CD4-positive, alpha-beta T cell (primary cell): ENCODE measurements at regions of chr2 and their contacts with region 1.

Region 1: GRCh38 chr2:216404010-216404618 is 8.2 kb upstream of the SMARCAL1 start:
- DNase-seq: peak in 13 of 14 experiments; percentile 15 to 72 (median 41)
- ATAC-seq: peak; percentile 72
- H3K4me3 ChIP-seq: no peak overlapping the region
- H3K4me3 Mint-ChIP-seq: no peak overlapping the region
- H3K27ac ChIP-seq: no peak overlapping the region
- H3K27ac Mint-ChIP-seq: no peak overlapping the region
- H3K4me1 ChIP-seq: peaks cover 2% of the 10 kb centered on the region
- H3K4me1 Mint-ChIP-seq: peaks cover 4% of the 10 kb centered on the region
- H3K27me3 ChIP-seq: no peaks in the 10 kb centered on the region
- H3K27me3 Mint-ChIP-seq: no peaks in the 10 kb centered on the region
- CTCF ChIP-seq: peak; percentile 79

Region 2: DNA sequence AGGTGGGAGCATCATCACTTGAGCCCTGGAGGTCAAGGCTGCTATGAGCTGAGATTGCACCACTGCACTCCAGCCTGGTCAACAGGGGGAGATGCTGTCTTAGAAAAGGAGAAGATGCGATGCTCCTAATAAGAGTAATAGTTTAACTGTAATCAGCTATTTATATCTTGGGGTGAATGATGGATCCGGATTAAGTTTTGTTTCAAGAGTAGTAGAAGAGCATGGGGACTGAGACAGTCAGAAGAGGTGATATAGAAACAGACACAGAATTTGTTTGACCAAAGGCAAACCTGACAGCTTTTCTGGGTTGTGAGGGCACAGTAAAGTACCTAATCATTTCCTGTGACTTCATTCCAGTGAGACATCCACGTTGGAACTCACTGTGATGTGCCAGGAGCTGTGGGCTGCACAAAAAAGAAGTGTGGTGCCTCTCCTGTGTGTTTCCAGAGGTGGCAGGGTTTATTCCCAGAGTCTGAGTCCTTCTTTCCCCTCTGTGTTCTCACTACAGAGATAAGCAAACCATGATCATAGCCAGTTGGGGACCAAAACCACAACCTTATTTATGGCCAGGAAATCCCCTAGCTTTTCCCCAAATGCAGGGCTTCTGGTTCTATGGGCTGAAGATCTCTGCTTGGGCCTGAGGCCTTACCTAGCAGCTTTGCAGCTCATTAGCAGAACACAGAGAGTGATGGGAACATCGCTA is 181.3 kb before region 1 on chr2:
- CTCF ChIA-PET with region 1: interaction called, 4 read pairs
- POLR2A ChIA-PET with region 1: no interaction called
- intact Hi-C with region 1: loop called (anchors 2 kb)
- DNase-seq: peak in 4 of 14 experiments; percentile 9 to 30 (median 25)
- ATAC-seq: no peak
- H3K4me3 ChIP-seq: no peak overlapping the region
- H3K4me3 Mint-ChIP-seq: no peak overlapping the region
- H3K27ac ChIP-seq: no peak overlapping the region
- H3K27ac Mint-ChIP-seq: no peak overlapping the region
- H3K4me1 ChIP-seq: peaks cover 12% of the 10 kb centered on the region
- H3K4me1 Mint-ChIP-seq: peaks cover 18% of the 10 kb centered on the region
- H3K27me3 ChIP-seq: no peaks in the 10 kb centered on the region
- H3K27me3 Mint-ChIP-seq: no peaks in the 10 kb centered on the region
- CTCF ChIP-seq: no peak

Region 3: DNA sequence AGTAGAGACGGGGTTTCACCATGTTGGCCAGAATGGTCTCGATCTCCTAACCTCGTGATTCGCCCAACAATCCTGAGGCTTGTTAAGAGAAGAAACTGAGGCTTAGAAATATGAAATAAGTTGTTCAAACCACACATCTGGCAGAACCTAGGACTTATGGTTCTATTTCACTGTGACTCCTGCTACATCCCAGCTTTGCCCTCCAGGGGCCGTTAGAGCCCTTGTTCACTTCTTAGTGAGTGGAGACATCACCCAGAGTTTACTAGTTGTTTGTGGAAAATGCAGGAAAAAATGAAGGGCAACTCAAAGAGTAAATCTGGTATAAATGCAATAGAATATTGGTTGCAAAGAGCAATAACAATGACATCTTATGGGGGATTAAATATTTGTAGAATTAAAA is 75.8 kb before region 1 on chr2:
- CTCF ChIA-PET with region 1: interaction called, 4 read pairs
- POLR2A ChIA-PET with region 1: no interaction called
- intact Hi-C with region 1: loop called in 1 of 2 experiments (anchors 1 kb)
- DNase-seq: peak in 4 of 14 experiments; percentile 13 to 46 (median 34)
- ATAC-seq: no peak
- H3K4me3 ChIP-seq: no peak overlapping the region
- H3K4me3 Mint-ChIP-seq: no peak overlapping the region
- H3K27ac ChIP-seq: no peak overlapping the region
- H3K27ac Mint-ChIP-seq: no peak overlapping the region
- H3K4me1 ChIP-seq: no peaks in the 10 kb centered on the region
- H3K4me1 Mint-ChIP-seq: no peaks in the 10 kb centered on the region
- H3K27me3 ChIP-seq: no peaks in the 10 kb centered on the region
- H3K27me3 Mint-ChIP-seq: no peaks in the 10 kb centered on the region
- CTCF ChIP-seq: no peak

Region 4: DNA sequence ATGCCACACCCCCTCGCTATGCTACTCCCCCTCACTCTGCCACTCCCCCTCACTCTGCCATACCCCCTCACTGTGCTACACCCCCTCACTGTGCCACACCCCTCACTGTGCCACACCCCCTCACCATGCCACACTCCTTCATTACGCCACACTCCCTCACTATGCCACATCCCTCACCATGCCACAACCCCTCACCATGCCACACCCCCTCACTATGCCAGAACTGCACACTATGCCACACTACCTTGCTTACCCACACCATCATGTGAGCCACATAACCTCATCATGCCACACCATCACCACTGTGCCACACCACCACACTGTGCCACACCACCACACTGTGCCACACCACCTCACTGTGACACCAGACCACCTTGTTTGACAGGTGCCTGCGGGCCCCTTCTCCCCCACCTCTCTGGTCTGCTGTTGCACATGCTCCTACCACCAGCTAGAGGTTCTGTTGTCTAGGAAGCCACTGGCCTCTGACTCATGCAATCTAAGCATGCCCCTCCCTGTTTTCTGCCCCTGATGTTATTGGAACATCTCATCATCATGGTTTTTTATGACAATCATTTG is 53.8 kb before region 1 on chr2:
- CTCF ChIA-PET with region 1: no interaction called
- POLR2A ChIA-PET with region 1: interaction called, 3 read pairs
- intact Hi-C with region 1: loop called in 1 of 2 experiments (anchors 2 kb)
- DNase-seq: peak in 8 of 14 experiments; percentile 8 to 66 (median 13)
- ATAC-seq: peak; percentile 15
- H3K4me3 ChIP-seq: no peak overlapping the region
- H3K4me3 Mint-ChIP-seq: peak overlapping the region; percentile 12
- H3K27ac ChIP-seq: no peak overlapping the region
- H3K27ac Mint-ChIP-seq: peak overlapping the region; percentile 78
- H3K4me1 ChIP-seq: peaks cover 68% of the 10 kb centered on the region
- H3K4me1 Mint-ChIP-seq: peaks cover 88% of the 10 kb centered on the region
- H3K27me3 ChIP-seq: no peaks in the 10 kb centered on the region
- H3K27me3 Mint-ChIP-seq: no peaks in the 10 kb centered on the region
- CTCF ChIP-seq: no peak

Region 5: DNA sequence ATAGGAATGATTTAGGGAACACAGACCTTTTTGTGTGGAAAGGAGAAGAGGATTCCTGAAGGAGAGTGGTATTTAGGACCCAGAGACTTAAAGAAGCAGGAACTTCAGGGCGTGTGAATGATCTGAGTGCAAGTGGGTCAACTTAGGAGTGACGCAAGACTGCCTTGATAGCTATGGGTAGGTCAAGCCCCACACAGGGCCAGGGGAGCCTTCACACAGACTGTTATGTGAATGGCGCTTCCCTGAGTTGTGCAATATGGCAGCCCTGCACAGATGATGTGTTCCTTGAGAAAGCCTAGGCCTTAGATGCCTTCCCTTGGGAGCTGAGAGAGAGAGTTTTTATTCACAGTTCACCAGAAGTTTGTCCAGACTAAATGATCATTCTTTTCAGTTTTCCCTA is 338.3 kb after region 1 on chr2:
- CTCF ChIA-PET with region 1: no interaction called
- POLR2A ChIA-PET with region 1: no interaction called
- intact Hi-C with region 1: no loop called
- DNase-seq: no peak
- ATAC-seq: no peak
- H3K4me3 ChIP-seq: no peak overlapping the region
- H3K4me3 Mint-ChIP-seq: no peak overlapping the region
- H3K27ac ChIP-seq: no peak overlapping the region
- H3K27ac Mint-ChIP-seq: no peak overlapping the region
- H3K4me1 ChIP-seq: no peaks in the 10 kb centered on the region
- H3K4me1 Mint-ChIP-seq: no peaks in the 10 kb centered on the region
- H3K27me3 ChIP-seq: peaks cover 0 to 5% of the 10 kb centered on the region in 2 experiments
- H3K27me3 Mint-ChIP-seq: peaks cover 12% of the 10 kb centered on the region
- CTCF ChIP-seq: no peak

Region 6: DNA sequence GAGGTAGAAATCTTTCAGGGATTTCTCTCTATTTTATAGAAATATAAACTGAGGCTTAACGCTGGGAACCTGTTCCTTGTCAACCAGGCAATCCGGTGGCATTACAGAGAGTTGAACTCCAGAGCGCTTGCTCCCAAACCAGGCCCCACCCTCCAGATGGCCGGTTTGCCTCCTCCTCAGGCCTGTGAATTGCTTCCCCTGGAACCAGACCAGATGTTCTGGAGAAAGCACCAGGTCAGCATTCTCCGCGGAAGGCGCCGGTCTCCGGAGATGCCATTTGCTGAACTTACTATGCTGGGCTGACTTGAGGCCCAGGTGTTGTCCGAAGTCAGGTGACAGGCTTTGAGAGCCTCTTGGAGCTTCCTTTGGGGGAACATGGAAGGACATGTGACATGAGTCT is 438.5 kb after region 1 on chr2:
- CTCF ChIA-PET with region 1: no interaction called
- POLR2A ChIA-PET with region 1: no interaction called
- intact Hi-C with region 1: no loop called
- DNase-seq: no peak
- ATAC-seq: no peak
- H3K4me3 ChIP-seq: no peak overlapping the region
- H3K4me3 Mint-ChIP-seq: no peak overlapping the region
- H3K27ac ChIP-seq: no peak overlapping the region
- H3K27ac Mint-ChIP-seq: no peak overlapping the region
- H3K4me1 ChIP-seq: no peaks in the 10 kb centered on the region
- H3K4me1 Mint-ChIP-seq: no peaks in the 10 kb centered on the region
- H3K27me3 ChIP-seq: no peaks in the 10 kb centered on the region
- H3K27me3 Mint-ChIP-seq: no peaks in the 10 kb centered on the region
- CTCF ChIP-seq: no peak